CD4-positive, alpha-beta memory T cell (primary cell): ENCODE measurements at regions of chr11 and their contacts with region 1.

Region 1: GRCh38 chr11:57567515-57568329 is at the start of gene UBE2L6:
- DNase-seq: peak; percentile 59 to 86 (median 66)
- H3K4me3 ChIP-seq: peak within 1 kb of the TSS; percentile 72 to 81
- H3K4me3 Mint-ChIP-seq: peak within 1 kb of the TSS; percentile 94 to 100 (median 99)
- H3K27ac ChIP-seq: peak within 1 kb of the TSS; percentile 93
- H3K27ac Mint-ChIP-seq: peak within 1 kb of the TSS; percentile 97 to 99 (median 98)
- H3K4me1 ChIP-seq: peaks cover 34% of the 10 kb centered on the region
- H3K4me1 Mint-ChIP-seq: peaks cover 27 to 65% (median 42%) of the 10 kb centered on the region in 4 donors
- H3K27me3 ChIP-seq: no peaks in the 10 kb centered on the region
- H3K27me3 Mint-ChIP-seq: no peaks in the 10 kb centered on the region
- total RNA-seq, gene UBE2L6: 79.7 to 82.9 TPM

Region 2: GRCh38 chr11:57402188-57403002 is 165.3 kb before region 1 on chr11:
- CTCF ChIA-PET with region 1: no interaction called
- POLR2A ChIA-PET with region 1: no interaction called
- intact Hi-C with region 1: no loop called
- DNase-seq: no peak
- H3K4me3 ChIP-seq: no peak overlapping the region
- H3K4me3 Mint-ChIP-seq: no peak overlapping the region
- H3K27ac ChIP-seq: no peak overlapping the region
- H3K27ac Mint-ChIP-seq: no peak overlapping the region
- H3K4me1 ChIP-seq: peaks cover 8% of the 10 kb centered on the region
- H3K4me1 Mint-ChIP-seq: peaks cover 3 to 16% (median 10%) of the 10 kb centered on the region in 4 donors
- H3K27me3 ChIP-seq: no peaks in the 10 kb centered on the region
- H3K27me3 Mint-ChIP-seq: no peaks in the 10 kb centered on the region

Region 3: DNA sequence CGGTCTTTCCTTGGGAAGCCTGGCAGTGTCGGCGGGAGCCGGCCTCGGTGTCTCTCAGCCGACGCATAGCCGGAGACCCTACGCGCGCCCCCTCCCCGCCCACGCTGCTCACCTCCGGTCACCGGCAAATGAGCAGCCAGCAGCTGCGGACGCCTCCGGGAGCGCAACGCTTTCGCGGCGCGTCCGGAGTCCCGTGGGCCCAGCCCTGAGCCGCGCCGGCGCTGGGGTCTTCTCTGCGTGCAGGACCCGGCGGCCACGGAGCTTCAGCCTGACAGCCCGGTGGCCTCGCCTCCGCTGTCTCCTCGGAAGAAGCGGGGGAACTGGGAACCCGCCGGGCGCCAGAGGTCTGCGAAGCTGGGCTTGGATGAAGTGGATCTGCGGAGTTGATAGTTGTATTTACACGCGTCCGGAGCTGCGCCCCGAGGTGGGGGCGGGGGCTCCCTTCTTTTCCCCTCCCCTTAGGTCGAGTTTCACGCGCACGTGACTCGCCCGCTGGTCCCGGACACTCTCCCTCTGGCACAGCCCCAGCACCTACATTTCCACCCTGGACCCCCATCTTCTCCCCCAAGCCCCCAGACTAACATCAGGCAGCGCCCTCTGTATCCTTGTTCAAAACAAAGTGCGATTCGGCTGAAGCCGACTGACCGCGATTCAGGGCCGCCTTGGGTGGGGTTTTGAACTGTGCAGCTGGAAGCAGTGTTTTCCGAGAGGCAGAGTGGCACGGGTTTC is 52.2 kb before region 1 on chr11 and contains the start of gene SLC43A1:
- CTCF ChIA-PET with region 1: interaction called, 5 read pairs
- POLR2A ChIA-PET with region 1: interaction called, 11 read pairs
- intact Hi-C with region 1: no loop called
- DNase-seq: peak in 2 of 5 donors; percentile 10 to 13
- H3K4me3 ChIP-seq: peak within 1 kb of the TSS; percentile 69 to 84
- H3K4me3 Mint-ChIP-seq: peak within 1 kb of the TSS; percentile 97 to 99 (median 98)
- H3K27ac ChIP-seq: peak within 1 kb of the TSS; percentile 43
- H3K27ac Mint-ChIP-seq: peak within 1 kb of the TSS; percentile 78 to 95 (median 89)
- H3K4me1 ChIP-seq: peaks cover 22% of the 10 kb centered on the region
- H3K4me1 Mint-ChIP-seq: peaks cover 17 to 32% (median 26%) of the 10 kb centered on the region in 4 donors
- H3K27me3 ChIP-seq: no peaks in the 10 kb centered on the region
- H3K27me3 Mint-ChIP-seq: no peaks in the 10 kb centered on the region
- total RNA-seq, gene SLC43A1: 18.1 to 21.7 TPM

Region 4: DNA sequence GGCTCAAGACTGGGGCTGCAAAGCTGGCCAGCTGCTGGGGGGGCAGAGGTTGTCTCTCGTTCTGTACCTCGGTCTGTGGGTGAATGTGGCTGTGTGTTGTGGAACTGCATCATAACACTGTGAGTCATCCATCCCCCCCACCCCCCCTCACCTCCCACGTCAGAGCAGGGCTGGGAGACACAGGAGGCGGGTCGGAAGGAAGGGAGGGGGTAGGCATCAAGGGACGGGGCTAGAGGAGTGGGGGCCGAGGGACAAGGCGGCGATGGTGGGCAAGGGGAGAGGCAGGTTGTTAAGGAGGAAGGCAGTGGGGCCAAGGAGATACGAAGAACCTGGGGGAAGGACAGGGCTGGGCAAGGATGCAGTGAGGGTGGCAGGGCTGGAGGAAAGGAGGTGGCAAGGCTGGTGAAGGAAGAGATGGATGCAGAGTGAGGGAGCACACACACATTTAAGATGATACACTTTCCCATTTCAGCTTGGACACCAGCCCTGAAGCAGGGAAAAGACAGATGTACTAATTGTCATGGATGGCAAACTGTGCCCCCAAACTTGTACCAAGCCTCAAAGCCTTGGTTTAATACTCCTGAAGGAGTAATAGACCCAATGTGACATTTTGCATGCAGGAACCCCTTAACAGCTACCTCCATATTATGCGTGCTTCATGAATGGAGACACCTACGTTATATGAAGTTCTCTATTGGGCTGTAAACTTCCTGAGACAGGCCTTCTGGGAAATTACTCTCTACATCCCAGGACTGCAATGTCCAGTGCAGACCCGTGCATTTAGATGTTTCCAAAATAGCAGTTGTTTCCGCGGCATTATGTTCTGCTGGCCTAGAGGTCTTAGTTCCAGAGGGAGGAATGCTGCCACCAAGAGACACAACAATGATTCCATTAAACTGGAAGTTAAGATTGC is 82.4 kb after region 1 on chr11 and contains the start of gene YPEL4:
- CTCF ChIA-PET with region 1: interaction called, 181 read pairs
- POLR2A ChIA-PET with region 1: interaction called, 14 read pairs
- intact Hi-C with region 1: no loop called
- DNase-seq: peak; percentile 69 to 89 (median 74)
- H3K4me3 ChIP-seq: peak within 1 kb of the TSS; percentile 37 to 55
- H3K4me3 Mint-ChIP-seq: peak within 1 kb of the TSS; percentile 83 to 94 (median 86)
- H3K27ac ChIP-seq: peak within 1 kb of the TSS; percentile 10
- H3K27ac Mint-ChIP-seq: peak within 1 kb of the TSS; percentile 92 to 99 (median 95)
- H3K4me1 ChIP-seq: peaks cover 18% of the 10 kb centered on the region
- H3K4me1 Mint-ChIP-seq: peaks cover 15 to 59% (median 31%) of the 10 kb centered on the region in 4 donors
- H3K27me3 ChIP-seq: peaks cover 37% of the 10 kb centered on the region
- H3K27me3 Mint-ChIP-seq: peaks cover 25 to 39% of the 10 kb centered on the region in 2 donors
- total RNA-seq, gene YPEL4: 11.8 to 12.6 TPM

Region 5: DNA sequence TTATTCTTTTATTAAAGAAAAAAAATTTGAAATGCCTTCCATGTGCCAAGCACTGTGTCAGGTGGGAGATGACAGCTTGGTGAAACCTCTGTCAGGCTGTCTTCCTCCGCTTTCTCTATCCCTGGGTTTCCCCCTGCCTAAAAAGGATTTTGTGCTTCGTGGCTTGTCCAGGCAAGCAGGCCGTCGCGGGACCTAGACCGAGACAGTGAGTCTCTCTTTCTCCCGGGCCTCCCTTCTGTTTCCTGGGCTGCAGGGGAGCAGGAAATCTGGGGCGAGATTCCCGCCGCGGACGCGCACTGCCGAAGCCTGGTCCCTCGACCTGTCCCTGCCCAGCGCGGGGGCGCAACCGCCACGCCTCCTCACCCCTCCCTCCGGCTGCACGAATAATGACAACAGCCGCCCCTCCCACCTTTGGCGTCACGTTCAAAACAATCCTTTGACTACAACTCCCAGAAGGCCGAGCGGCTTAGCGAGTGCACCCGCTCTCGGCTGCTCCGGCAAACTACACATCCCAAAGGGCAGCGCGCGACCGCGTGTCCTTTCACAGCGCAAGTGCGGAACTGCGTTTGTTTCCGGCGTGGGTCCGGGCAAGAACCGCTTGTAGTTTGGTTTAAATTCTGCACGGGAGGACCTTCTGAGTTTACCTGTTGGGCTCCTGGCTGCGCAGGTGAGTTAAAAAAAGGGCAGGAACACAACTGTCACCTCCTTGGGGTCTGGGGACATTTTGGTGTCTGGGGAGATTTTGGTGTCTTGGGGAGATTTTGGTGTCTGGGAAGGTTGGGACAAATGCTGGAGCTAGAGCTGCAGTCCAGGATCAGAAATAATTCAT is 89.7 kb after region 1 on chr11 and contains the start of gene CLP1:
- CTCF ChIA-PET with region 1: interaction called, 16 read pairs
- POLR2A ChIA-PET with region 1: interaction called, 5 read pairs
- intact Hi-C with region 1: no loop called
- DNase-seq: peak; percentile 98 to 99 (median 98)
- H3K4me3 ChIP-seq: peak within 1 kb of the TSS; percentile 91 to 96
- H3K4me3 Mint-ChIP-seq: peak within 1 kb of the TSS; percentile 94 to 100 (median 98)
- H3K27ac ChIP-seq: peak within 1 kb of the TSS; percentile 84
- H3K27ac Mint-ChIP-seq: peak within 1 kb of the TSS; percentile 86 to 100 (median 97)
- H3K4me1 ChIP-seq: peaks cover 16% of the 10 kb centered on the region
- H3K4me1 Mint-ChIP-seq: peaks cover 15 to 30% (median 27%) of the 10 kb centered on the region in 4 donors
- H3K27me3 ChIP-seq: no peaks in the 10 kb centered on the region
- H3K27me3 Mint-ChIP-seq: no peaks in the 10 kb centered on the region
- total RNA-seq, gene CLP1: 14.1 to 16.0 TPM

Region 6: DNA sequence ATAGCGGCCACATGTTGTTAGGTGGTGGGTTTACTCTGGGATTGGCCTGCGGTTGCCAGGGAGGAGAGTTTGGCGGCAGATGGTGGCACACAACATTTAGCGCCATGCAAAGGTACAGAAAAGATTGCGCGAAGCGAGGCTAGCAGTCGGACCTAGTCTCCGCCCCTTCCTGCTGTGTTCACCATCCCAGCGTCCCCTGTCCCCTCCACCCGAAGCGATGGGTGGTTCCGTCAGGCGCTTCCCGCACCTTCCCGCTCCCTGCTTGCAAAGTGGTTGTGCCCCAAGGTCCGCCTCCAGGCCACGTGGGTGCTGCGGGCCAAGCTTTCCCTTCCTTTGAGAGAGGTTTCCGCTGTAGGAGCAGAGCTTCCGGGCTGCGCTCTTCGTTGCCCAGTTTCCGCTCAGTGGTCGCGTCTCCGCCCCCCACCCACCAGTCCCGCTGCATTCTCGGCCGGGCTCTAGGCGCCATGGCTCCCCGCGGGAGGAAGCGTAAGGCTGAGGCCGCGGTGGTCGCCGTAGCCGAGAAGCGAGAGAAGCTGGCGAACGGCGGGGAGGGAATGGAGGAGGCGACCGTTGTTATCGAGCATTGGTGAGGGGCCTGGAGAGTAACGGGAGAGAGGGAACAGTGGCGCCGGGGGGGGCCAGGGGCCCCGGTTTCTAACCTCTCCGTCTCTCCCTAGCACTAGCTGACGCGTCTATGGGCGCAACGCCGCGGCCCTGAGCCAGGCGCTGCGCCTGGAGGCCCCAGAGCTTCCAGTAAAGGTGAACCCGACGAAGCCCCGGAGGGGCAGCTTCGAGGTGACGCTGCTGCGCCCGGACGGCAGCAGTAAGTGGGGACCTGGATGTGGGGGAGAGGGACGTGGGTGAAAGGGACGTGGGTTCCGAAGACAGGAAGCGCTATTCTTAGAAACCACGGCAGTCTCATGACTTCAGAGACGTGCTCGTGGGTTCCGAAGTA is 173.7 kb after region 1 on chr11 and contains the start of gene SELENOH:
- CTCF ChIA-PET with region 1: interaction called, 6 read pairs
- POLR2A ChIA-PET with region 1: interaction called, 7 read pairs
- intact Hi-C with region 1: loop called (anchors 2 kb)
- DNase-seq: peak; percentile 90 to 96 (median 91)
- H3K4me3 ChIP-seq: peak within 1 kb of the TSS; percentile 77 to 80
- H3K4me3 Mint-ChIP-seq: peak within 1 kb of the TSS; percentile 90 to 100 (median 98)
- H3K27ac ChIP-seq: peak within 1 kb of the TSS; percentile 82
- H3K27ac Mint-ChIP-seq: peak within 1 kb of the TSS; percentile 96 to 100 (median 99)
- H3K4me1 ChIP-seq: peaks cover 26% of the 10 kb centered on the region
- H3K4me1 Mint-ChIP-seq: peaks cover 18 to 36% (median 28%) of the 10 kb centered on the region in 4 donors
- H3K27me3 ChIP-seq: no peaks in the 10 kb centered on the region
- H3K27me3 Mint-ChIP-seq: no peaks in the 10 kb centered on the region
- total RNA-seq, gene SELENOH: 102 to 113 TPM

Region 7: GRCh38 chr11:57778318-57779037 is 210.8 kb after region 1 on chr11:
- CTCF ChIA-PET with region 1: no interaction called
- POLR2A ChIA-PET with region 1: no interaction called
- intact Hi-C with region 1: no loop called
- DNase-seq: no peak
- H3K4me3 ChIP-seq: no peak overlapping the region
- H3K4me3 Mint-ChIP-seq: no peak overlapping the region
- H3K27ac ChIP-seq: no peak overlapping the region
- H3K27ac Mint-ChIP-seq: peak overlapping the region in 1 of 7 donors; percentile 19
- H3K4me1 ChIP-seq: no peaks in the 10 kb centered on the region
- H3K4me1 Mint-ChIP-seq: peaks cover 0 to 14% (median 4%) of the 10 kb centered on the region in 4 donors
- H3K27me3 ChIP-seq: no peaks in the 10 kb centered on the region
- H3K27me3 Mint-ChIP-seq: no peaks in the 10 kb centered on the region

Region 8: DNA sequence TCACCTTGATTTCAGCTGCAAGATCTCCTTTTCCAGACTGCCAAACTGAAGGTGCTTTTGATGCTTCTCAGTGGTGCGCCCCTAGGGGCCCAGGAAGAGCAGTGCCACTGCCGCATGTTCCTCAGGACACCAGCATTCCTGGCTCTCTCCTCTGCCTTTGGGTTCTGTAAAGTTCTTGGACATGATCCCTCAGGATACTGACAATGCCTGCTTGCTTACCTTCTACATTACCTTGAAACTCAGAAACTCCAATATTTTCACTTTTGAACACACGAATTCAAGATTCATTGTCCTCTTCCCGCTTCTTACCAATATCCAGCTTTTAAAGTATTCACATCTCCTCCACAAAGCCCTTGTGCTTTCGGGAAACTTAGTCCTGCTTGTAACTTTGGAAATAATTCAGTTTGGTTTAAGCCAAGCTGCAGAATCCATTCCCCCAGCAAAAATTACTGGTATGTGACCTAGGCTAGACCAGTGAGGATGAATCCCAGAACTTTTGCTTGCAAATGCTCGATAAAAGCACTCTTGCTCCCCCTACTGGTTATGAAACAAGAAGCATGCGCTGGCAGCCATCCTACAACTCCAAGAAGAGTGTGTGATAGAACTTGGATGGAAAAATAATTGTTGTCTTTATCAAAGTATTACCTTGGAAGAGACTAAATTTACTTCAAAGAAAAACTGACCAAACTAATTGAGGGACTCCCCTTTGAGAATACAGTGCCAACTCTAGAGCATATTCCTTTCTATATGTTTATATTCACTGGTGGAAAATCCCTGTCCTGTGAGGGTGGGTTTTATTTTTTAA is 956.7 kb after region 1 on chr11:
- CTCF ChIA-PET with region 1: interaction called, 3 read pairs
- POLR2A ChIA-PET with region 1: no interaction called
- intact Hi-C with region 1: loop called (anchors 1 kb)
- DNase-seq: peak; percentile 57 to 66 (median 63)
- H3K4me3 ChIP-seq: peak overlapping the region in 1 of 2 donors; percentile 22
- H3K4me3 Mint-ChIP-seq: peak overlapping the region; percentile 68 to 85 (median 76)
- H3K27ac ChIP-seq: peak overlapping the region; percentile 55
- H3K27ac Mint-ChIP-seq: peak overlapping the region; percentile 77 to 97 (median 94)
- H3K4me1 ChIP-seq: peaks cover 35% of the 10 kb centered on the region
- H3K4me1 Mint-ChIP-seq: peaks cover 31 to 54% (median 40%) of the 10 kb centered on the region in 4 donors
- H3K27me3 ChIP-seq: no peaks in the 10 kb centered on the region
- H3K27me3 Mint-ChIP-seq: no peaks in the 10 kb centered on the region